Activated CD8-positive, alpha-beta memory T cell treated with anti-CD3 and anti-CD28 coated beads, Interleukin-2, amount 10 ng/mL, durations not matched to agents 7 days and 5 days (primary cell): ENCODE measurements at regions of chr1 and their contacts with region 1.

Region 1: GRCh38 chr1:50968158-50968820 is 1.8 kb upstream of the CDKN2C start:
- DNase-seq: peak; percentile 86
- ATAC-seq: peak; percentile 82
- H3K4me3 Mint-ChIP-seq: peak overlapping the region; percentile 97
- H3K27ac Mint-ChIP-seq: peak overlapping the region; percentile 97
- H3K4me1 Mint-ChIP-seq: peaks cover 24% of the 10 kb centered on the region
- H3K27me3 Mint-ChIP-seq: peaks cover 30% of the 10 kb centered on the region

Region 2: DNA sequence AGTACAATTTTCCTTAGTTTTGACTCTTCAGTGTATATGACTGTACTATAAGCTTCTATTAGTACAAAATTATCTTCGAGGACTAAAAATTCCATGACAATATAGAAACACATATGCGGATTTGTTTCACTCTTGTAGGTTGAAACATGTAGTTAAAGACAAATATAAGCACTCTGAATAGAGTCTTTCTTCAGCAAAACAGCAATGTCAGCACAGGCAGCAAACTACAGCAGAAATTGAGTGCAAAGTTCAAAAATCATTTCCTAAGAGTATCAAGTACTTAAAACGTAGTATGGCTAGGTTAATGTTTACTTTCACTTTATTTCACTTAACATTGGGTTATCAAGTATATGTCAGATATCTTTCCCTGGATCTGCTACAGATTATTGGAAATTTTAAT is 115.0 kb before region 1 on chr1:
- CTCF ChIA-PET with region 1: no interaction called
- DNase-seq: no peak
- ATAC-seq: no peak
- H3K4me3 Mint-ChIP-seq: no peak overlapping the region
- H3K27ac Mint-ChIP-seq: no peak overlapping the region
- H3K4me1 Mint-ChIP-seq: peaks cover 3% of the 10 kb centered on the region
- H3K27me3 Mint-ChIP-seq: no peaks in the 10 kb centered on the region

Region 3: GRCh38 chr1:50929376-50929958 is 38.8 kb before region 1 on chr1:
- CTCF ChIA-PET with region 1: interaction called, 22 read pairs
- DNase-seq: no peak
- ATAC-seq: no peak
- H3K4me3 Mint-ChIP-seq: no peak overlapping the region
- H3K27ac Mint-ChIP-seq: no peak overlapping the region
- H3K4me1 Mint-ChIP-seq: peaks cover 16% of the 10 kb centered on the region
- H3K27me3 Mint-ChIP-seq: no peaks in the 10 kb centered on the region

Region 4: DNA sequence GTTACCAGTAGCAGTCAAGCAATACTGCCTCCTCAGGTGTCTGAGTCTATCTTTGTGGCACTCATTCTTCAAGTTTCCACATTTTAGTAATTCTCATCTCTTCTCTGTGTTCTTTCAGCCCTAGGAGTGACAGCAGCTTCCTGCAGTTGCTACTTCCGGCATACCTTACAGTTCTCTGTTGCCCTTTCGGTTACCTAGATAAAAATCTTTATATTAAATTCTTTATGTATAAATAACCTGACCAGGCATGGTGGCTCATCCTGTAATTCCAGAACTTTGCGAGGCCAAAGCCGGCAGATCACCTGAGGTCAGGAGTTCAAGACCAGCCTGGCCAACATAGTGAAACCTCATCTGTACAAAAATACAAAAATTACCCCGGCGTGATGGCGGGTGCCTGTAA is 64.6 kb after region 1 on chr1:
- CTCF ChIA-PET with region 1: no interaction called
- DNase-seq: no peak
- ATAC-seq: no peak
- H3K4me3 Mint-ChIP-seq: no peak overlapping the region
- H3K27ac Mint-ChIP-seq: no peak overlapping the region
- H3K4me1 Mint-ChIP-seq: no peaks in the 10 kb centered on the region
- H3K27me3 Mint-ChIP-seq: peaks cover 9% of the 10 kb centered on the region

Region 5: DNA sequence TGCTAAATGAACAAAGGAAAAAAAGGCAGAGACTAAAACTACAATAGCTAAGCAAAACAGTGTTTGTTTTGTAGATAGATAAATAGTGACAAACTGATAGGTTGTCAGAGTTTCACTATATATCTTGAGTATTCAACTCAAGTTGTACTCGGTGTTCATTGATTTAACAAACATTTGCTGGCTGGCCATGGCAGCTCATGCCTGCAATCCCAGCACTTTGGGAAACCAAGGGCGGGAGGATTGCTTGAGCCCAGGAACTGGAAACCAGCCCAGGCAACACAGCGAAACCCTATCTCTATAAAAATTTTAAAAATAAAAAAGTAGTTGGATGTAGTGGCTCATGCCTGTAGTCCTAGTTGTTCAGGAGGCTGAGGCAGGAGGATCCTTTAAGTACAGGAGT is 151.0 kb after region 1 on chr1:
- CTCF ChIA-PET with region 1: no interaction called
- DNase-seq: no peak
- ATAC-seq: no peak
- H3K4me3 Mint-ChIP-seq: no peak overlapping the region
- H3K27ac Mint-ChIP-seq: no peak overlapping the region
- H3K4me1 Mint-ChIP-seq: no peaks in the 10 kb centered on the region
- H3K27me3 Mint-ChIP-seq: peaks cover 35% of the 10 kb centered on the region